ENCODE measurements at regions of chr7 and their contacts with region 1.

Region 1: GRCh38 chr7:50142425-50143017 is 49.5 kb upstream of the ZPBP start:
- DNase-seq: peak in 4 of 5 donors; percentile 57 to 63 (median 60)
- H3K4me3 ChIP-seq: no peak overlapping the region
- H3K4me3 Mint-ChIP-seq: peak overlapping the region; percentile 3 to 77 (median 49)
- H3K27ac ChIP-seq: no peak overlapping the region
- H3K27ac Mint-ChIP-seq: peak overlapping the region in 6 of 7 donors; percentile 0 to 93 (median 36)
- H3K4me1 ChIP-seq: peaks cover 26% of the 10 kb centered on the region
- H3K4me1 Mint-ChIP-seq: peaks cover 11 to 25% (median 18%) of the 10 kb centered on the region in 4 donors
- H3K27me3 ChIP-seq: no peaks in the 10 kb centered on the region
- H3K27me3 Mint-ChIP-seq: peaks cover 0 to 2% of the 10 kb centered on the region in 2 donors

Region 2: DNA sequence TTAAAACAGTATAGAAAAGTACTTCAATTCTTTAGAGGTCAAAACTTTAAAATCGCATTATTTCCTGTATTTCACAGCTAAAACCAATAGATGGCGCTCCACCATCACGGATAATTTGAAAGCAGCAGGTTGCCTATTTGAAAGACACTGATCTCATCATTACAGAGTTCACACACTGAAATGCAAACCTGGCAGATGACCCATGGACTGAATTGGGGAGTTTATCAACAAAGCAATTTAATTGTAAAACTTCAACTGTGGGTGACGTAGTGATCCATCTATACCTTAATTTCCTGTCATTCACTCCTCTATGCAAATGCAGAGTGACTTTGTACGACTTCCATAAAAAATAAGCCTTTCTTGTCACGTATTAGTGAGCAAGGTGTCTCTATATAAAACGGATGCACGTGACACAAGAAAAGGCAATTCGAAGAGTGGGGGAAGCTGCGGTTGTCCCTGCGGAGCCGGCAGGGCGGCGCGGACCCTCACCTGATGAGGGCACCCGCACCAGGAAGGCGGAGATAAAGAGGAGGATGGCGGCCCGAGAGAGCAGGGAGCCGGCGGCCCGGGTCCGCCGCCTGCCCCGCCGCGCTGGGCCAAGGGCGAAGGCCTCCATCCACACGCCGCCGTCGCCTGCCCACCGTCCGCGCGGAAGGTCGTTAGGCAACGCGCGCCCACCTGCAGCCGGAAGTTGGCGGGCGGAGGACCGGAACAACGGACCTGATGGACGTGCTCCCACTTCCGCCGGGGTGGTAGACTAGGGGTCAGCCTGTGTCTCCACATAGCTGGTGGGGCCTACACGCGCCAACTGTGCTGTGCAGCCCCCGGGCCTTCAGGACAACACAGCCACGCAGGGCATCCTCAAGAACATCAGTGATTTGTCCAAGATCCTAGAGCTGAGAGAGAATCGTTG is 49.7 kb before region 1 on chr7 and contains the start of gene ZPBP:
- CTCF ChIA-PET with region 1: interaction called, 11 read pairs
- POLR2A ChIA-PET with region 1: no interaction called
- intact Hi-C with region 1: loop called (anchors 1 kb)
- DNase-seq: peak; percentile 62 to 72 (median 69)
- H3K4me3 ChIP-seq: peak within 1 kb of the TSS; percentile 44 to 66
- H3K4me3 Mint-ChIP-seq: peak within 1 kb of the TSS; percentile 88 to 95 (median 88)
- H3K27ac ChIP-seq: peak within 1 kb of the TSS; percentile 23
- H3K27ac Mint-ChIP-seq: peak within 1 kb of the TSS; percentile 45 to 88 (median 80)
- H3K4me1 ChIP-seq: peaks cover 4% of the 10 kb centered on the region
- H3K4me1 Mint-ChIP-seq: peaks cover 4 to 7% (median 7%) of the 10 kb centered on the region in 4 donors
- H3K27me3 ChIP-seq: no peaks in the 10 kb centered on the region
- H3K27me3 Mint-ChIP-seq: no peaks in the 10 kb centered on the region
- total RNA-seq, gene ZPBP: not detected

Region 3: GRCh38 chr7:50156706-50157105 is 14.2 kb after region 1 on chr7:
- CTCF ChIA-PET with region 1: interaction called, 22 read pairs
- POLR2A ChIA-PET with region 1: interaction called, 7 read pairs
- intact Hi-C with region 1: no loop called
- DNase-seq: no peak
- H3K4me3 ChIP-seq: no peak overlapping the region
- H3K4me3 Mint-ChIP-seq: peak overlapping the region; percentile 17 to 87 (median 66)
- H3K27ac ChIP-seq: no peak overlapping the region
- H3K27ac Mint-ChIP-seq: peak overlapping the region; percentile 67 to 89 (median 87)
- H3K4me1 ChIP-seq: peaks cover 18% of the 10 kb centered on the region
- H3K4me1 Mint-ChIP-seq: peaks cover 16 to 28% (median 25%) of the 10 kb centered on the region in 4 donors
- H3K27me3 ChIP-seq: no peaks in the 10 kb centered on the region
- H3K27me3 Mint-ChIP-seq: no peaks in the 10 kb centered on the region

Region 4: GRCh38 chr7:50164559-50165170 is 22.1 kb after region 1 on chr7:
- CTCF ChIA-PET with region 1: interaction called, 13 read pairs
- POLR2A ChIA-PET with region 1: interaction called, 10 read pairs
- intact Hi-C with region 1: no loop called
- DNase-seq: peak; percentile 41 to 62 (median 51)
- H3K4me3 ChIP-seq: peak overlapping the region in 1 of 2 donors; percentile 38
- H3K4me3 Mint-ChIP-seq: peak overlapping the region; percentile 22 to 83 (median 77)
- H3K27ac ChIP-seq: peak overlapping the region; percentile 43
- H3K27ac Mint-ChIP-seq: peak overlapping the region; percentile 70 to 93 (median 85)
- H3K4me1 ChIP-seq: peaks cover 63% of the 10 kb centered on the region
- H3K4me1 Mint-ChIP-seq: peaks cover 40 to 74% (median 58%) of the 10 kb centered on the region in 4 donors
- H3K27me3 ChIP-seq: no peaks in the 10 kb centered on the region
- H3K27me3 Mint-ChIP-seq: no peaks in the 10 kb centered on the region

Region 5: DNA sequence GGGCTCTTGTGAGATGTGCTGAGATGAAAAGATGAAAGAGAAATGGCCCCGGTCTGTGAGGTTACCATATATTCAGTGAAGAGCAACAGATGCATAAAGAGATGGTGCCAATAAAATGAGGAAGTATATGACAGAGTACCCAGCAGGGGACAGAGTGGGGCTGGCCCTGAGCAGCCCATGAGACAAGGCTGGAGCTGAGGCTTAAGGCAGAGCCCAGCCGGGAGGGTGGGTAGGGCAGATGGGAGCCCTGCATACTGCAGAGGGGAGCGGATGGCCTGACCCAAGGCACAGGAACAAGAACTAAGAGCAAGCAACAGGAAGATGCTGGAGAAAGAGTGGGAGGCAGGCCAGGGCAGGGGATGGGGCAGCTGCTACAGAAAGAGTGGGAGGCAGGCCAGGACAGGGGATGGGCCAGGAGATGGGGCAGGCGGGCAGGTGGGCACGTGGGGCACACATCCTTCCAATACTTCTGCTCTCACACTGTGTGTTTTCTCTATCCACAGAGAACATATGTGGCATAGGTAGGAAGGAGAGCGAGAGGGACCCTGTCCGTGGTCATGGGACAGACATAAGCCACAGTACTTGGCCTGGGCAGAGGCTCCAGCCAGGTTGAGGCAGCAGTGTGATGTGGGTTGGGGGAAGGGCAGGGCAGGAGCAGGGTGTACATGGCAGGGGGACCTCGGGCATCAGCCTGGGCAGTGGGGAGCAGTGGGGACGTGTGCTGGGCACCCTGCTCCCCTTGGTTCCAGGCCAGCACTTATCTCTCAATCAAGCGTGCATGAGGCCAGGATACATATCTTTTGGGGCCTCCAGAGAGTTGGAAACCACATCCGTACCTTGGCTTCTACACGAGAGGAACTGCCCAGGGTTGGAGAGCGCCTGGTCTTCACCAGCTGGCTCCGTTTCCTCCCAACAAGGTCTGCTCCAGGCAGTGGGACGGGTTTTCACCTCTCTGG is 70.4 kb after region 1 on chr7:
- CTCF ChIA-PET with region 1: no interaction called
- POLR2A ChIA-PET with region 1: no interaction called
- intact Hi-C with region 1: no loop called
- DNase-seq: peak in 1 of 5 donors; percentile 36
- H3K4me3 ChIP-seq: no peak overlapping the region
- H3K4me3 Mint-ChIP-seq: peak overlapping the region in 7 of 8 donors; percentile 29 to 81 (median 72)
- H3K27ac ChIP-seq: no peak overlapping the region
- H3K27ac Mint-ChIP-seq: peak overlapping the region; percentile 16 to 94 (median 60)
- H3K4me1 ChIP-seq: peaks cover 89% of the 10 kb centered on the region
- H3K4me1 Mint-ChIP-seq: peaks cover 63 to 99% (median 83%) of the 10 kb centered on the region in 4 donors
- H3K27me3 ChIP-seq: no peaks in the 10 kb centered on the region
- H3K27me3 Mint-ChIP-seq: no peaks in the 10 kb centered on the region

Region 6: DNA sequence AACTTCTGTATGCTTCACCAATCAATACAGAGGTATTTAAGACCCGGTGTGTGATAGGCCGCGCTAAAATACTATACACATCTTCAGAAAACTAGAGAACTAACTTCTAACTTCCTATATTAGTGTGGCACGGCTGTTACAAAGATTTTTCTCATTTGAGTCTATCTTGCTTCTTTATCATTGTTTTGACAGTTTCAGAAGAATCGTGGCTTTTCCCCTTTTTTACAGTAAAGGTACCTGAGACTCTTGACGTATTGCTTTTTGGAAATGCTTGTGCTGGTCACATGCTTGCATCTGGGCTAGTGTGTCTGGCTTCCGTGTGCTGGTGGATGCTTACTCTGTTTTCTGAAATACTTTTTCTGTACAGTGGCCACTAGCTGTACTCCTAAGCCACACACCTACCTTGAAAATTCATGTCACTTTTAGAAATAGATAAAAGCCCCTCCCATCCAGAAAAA is 174.7 kb after region 1 on chr7:
- CTCF ChIA-PET with region 1: interaction called, 3 read pairs
- POLR2A ChIA-PET with region 1: no interaction called
- intact Hi-C with region 1: loop called (anchors 2 kb)
- DNase-seq: peak; percentile 78 to 89 (median 84)
- H3K4me3 ChIP-seq: peak overlapping the region in 1 of 2 donors; percentile 53
- H3K4me3 Mint-ChIP-seq: peak overlapping the region; percentile 78 to 100 (median 92)
- H3K27ac ChIP-seq: peak overlapping the region; percentile 90
- H3K27ac Mint-ChIP-seq: peak overlapping the region in 6 of 7 donors; percentile 93 to 99 (median 98)
- H3K4me1 ChIP-seq: peaks cover 99% of the 10 kb centered on the region
- H3K4me1 Mint-ChIP-seq: peaks cover 73 to 100% (median 86%) of the 10 kb centered on the region in 4 donors
- H3K27me3 ChIP-seq: no peaks in the 10 kb centered on the region
- H3K27me3 Mint-ChIP-seq: no peaks in the 10 kb centered on the region

Region 7: GRCh38 chr7:50584914-50585361 is 442.4 kb after region 1 on chr7:
- CTCF ChIA-PET with region 1: no interaction called
- POLR2A ChIA-PET with region 1: no interaction called
- intact Hi-C with region 1: no loop called
- DNase-seq: no peak
- H3K4me3 ChIP-seq: no peak overlapping the region
- H3K4me3 Mint-ChIP-seq: no peak overlapping the region
- H3K27ac ChIP-seq: no peak overlapping the region
- H3K27ac Mint-ChIP-seq: no peak overlapping the region
- H3K4me1 ChIP-seq: no peaks in the 10 kb centered on the region
- H3K4me1 Mint-ChIP-seq: no peaks in the 10 kb centered on the region
- H3K27me3 ChIP-seq: no peaks in the 10 kb centered on the region
- H3K27me3 Mint-ChIP-seq: peaks cover 1 to 5% of the 10 kb centered on the region in 2 donors

Region 8: GRCh38 chr7:50679218-50680007 is 536.9 kb after region 1 on chr7:
- CTCF ChIA-PET with region 1: interaction called, 8 read pairs
- POLR2A ChIA-PET with region 1: no interaction called
- intact Hi-C with region 1: loop called (anchors 1 kb)
- DNase-seq: peak in 4 of 5 donors; percentile 51 to 64 (median 58)
- H3K4me3 ChIP-seq: no peak overlapping the region
- H3K4me3 Mint-ChIP-seq: no peak overlapping the region
- H3K27ac ChIP-seq: no peak overlapping the region
- H3K27ac Mint-ChIP-seq: no peak overlapping the region
- H3K4me1 ChIP-seq: no peaks in the 10 kb centered on the region
- H3K4me1 Mint-ChIP-seq: peaks cover 0 to 3% (median under 1%) of the 10 kb centered on the region in 4 donors
- H3K27me3 ChIP-seq: no peaks in the 10 kb centered on the region
- H3K27me3 Mint-ChIP-seq: peaks cover 0 to under 1% of the 10 kb centered on the region in 2 donors

Measured in CD4-positive, alpha-beta memory T cell (primary cell).